PC-9 (cell line): ENCODE measurements at regions of chr2 and their contacts with region 1.

Region 1: DNA sequence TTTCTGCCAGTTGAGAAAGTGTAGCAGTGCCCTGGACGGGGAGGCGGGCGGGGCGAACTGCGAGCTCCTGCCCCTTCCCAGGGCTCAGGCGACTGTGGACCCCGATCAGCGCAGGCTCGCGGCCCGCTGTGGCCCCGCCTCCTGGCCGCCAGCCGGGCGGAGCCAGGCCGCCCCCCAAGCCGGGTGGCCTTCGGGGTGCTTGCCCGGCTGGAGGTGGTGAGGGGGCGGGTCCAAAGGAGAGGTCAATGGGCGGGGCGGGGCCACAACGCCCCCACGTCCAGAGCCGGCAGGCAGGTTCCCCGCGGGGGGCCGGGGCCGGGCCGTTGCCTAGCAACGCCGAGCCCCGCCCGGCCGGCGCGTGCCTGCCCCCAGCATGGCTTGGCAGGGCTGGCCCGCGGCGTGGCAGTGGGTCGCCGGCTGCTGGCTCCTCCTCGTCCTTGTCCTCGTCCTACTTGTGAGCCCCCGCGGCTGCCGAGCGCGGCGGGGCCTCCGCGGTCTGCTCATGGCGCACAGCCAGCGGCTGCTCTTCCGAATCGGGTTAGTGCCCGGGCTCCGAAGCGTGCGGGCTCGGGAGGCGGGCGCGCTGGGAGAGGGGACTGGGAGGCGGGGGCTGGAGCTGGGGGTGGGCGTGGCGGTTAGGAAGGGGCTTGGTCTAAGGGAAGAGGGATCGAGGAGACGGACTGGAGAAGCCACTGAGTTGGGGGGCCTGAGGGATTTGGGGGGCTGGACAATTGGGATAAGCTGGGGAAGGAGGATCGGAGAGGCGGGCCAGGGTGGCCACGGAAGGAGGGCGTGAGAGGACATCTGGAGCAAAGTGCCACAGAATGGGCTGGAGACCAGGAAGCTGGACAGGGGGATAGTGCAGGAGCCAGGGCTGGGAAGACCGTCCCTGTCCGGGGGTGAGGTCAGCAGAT is 30.8 kb upstream of the TMBIM1 start:
- DNase-seq: peak; percentile 66 to 94
- H3K4me3 ChIP-seq: peak overlapping the region; percentile 66
- H3K27ac ChIP-seq: peak overlapping the region; percentile 88
- H3K4me1 ChIP-seq: peaks cover 46% of the 10 kb centered on the region
- H3K27me3 ChIP-seq: no peaks in the 10 kb centered on the region
- CTCF ChIP-seq: no peak

Region 2: GRCh38 chr2:218360447-218360846 is 37.3 kb after region 1 on chr2:
- CTCF ChIA-PET with region 1: interaction called, 3 read pairs
- POLR2A ChIA-PET with region 1: interaction called, 30 read pairs
- intact Hi-C with region 1: loop called (anchors 1 kb)
- DNase-seq: no peak
- H3K4me3 ChIP-seq: no peak overlapping the region
- H3K27ac ChIP-seq: peak overlapping the region; percentile 82
- H3K4me1 ChIP-seq: peaks cover 36% of the 10 kb centered on the region
- H3K27me3 ChIP-seq: no peaks in the 10 kb centered on the region
- CTCF ChIP-seq: no peak